AG04449 (cell line): ENCODE measurements at regions of chr14 and their contacts with region 1.

Region 1: DNA sequence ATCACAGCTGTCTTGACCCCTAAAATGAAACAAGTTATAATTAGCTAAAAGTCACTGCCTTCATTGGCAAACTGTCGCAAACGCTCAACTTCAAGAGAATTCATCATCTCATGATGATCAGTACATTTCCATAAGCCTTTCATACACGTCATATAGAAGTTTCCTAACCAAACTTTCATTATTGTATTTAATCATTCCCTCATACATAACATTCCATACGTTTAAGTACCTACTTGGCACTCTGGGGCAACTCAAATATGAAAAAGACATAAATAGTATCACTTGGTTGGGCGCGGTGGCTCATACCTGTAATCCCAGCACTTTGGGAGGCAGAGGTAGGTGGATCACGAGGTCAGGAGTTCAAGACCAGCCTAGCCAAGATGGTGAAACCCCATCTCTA is 12.4 kb upstream of the PPP2R5E start:
- DNase-seq: no peak
- H3K4me3 ChIP-seq: no peak overlapping the region
- CTCF ChIP-seq: no peak

Region 2: GRCh38 chr14:63454863-63455622 is 100.5 kb before region 1 on chr14:
- CTCF ChIA-PET with region 1: no interaction called
- POLR2A ChIA-PET with region 1: no interaction called
- DNase-seq: no peak
- H3K4me3 ChIP-seq: no peak overlapping the region
- CTCF ChIP-seq: no peak

Region 3: GRCh38 chr14:63543000-63543825 is 12.4 kb before region 1 on chr14 and contains the start of gene PPP2R5E:
- CTCF ChIA-PET with region 1: interaction called, 11 read pairs
- POLR2A ChIA-PET with region 1: interaction called, 3 read pairs
- DNase-seq: peak; percentile 93
- H3K4me3 ChIP-seq: peak within 1 kb of the TSS; percentile 96
- CTCF ChIP-seq: no peak

Region 4: DNA sequence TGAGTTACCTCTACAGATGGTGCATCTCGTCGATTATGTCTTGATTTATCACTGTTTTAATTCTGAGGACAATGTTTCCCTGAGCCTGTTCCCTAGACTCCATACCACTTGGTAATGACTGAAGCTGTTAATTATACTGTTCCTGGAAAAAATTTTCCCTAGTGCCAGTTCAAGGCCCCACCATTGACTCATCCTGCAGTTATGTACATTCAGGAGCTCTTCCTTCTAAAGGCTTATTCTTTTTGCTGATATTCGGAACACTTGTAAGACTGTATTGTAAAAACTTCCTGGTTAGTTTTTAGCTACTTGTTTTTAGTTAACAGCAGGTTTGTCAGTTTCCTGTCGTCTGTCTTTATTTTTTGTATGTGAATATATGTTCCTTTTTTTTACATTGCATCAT is 18.0 kb after region 1 on chr14:
- CTCF ChIA-PET with region 1: no interaction called
- POLR2A ChIA-PET with region 1: no interaction called
- DNase-seq: no peak
- H3K4me3 ChIP-seq: no peak overlapping the region
- CTCF ChIP-seq: no peak